ENCODE measurements at regions of chr5 and their contacts with region 1.

Region 1: GRCh38 chr5:139651853-139652787 is 4.0 kb downstream of the CXXC5 start:
- DNase-seq: peak; percentile 91
- ATAC-seq: peak; percentile 56
- H3K4me3 Mint-ChIP-seq: peak overlapping the region; percentile 98
- H3K27ac Mint-ChIP-seq: peak overlapping the region; percentile 85
- H3K4me1 Mint-ChIP-seq: peaks cover 76% of the 10 kb centered on the region
- H3K27me3 Mint-ChIP-seq: no peaks in the 10 kb centered on the region
- CTCF ChIP-seq: no peak

Region 2: GRCh38 chr5:139593716-139594319 is 58.3 kb before region 1 on chr5:
- CTCF ChIA-PET with region 1: no interaction called
- POLR2A ChIA-PET with region 1: no interaction called
- intact Hi-C with region 1: no loop called
- DNase-seq: no peak
- ATAC-seq: no peak
- H3K4me3 Mint-ChIP-seq: no peak overlapping the region
- H3K27ac Mint-ChIP-seq: no peak overlapping the region
- H3K4me1 Mint-ChIP-seq: peaks cover 72% of the 10 kb centered on the region
- H3K27me3 Mint-ChIP-seq: no peaks in the 10 kb centered on the region
- CTCF ChIP-seq: no peak

Region 3: GRCh38 chr5:139670369-139671095 is 18.4 kb after region 1 on chr5:
- CTCF ChIA-PET with region 1: interaction called, 37 read pairs
- POLR2A ChIA-PET with region 1: interaction called, 676 read pairs
- intact Hi-C with region 1: loop called (anchors 1 kb)
- DNase-seq: peak; percentile 65
- ATAC-seq: peak; percentile 61
- H3K4me3 Mint-ChIP-seq: peak overlapping the region; percentile 86
- H3K27ac Mint-ChIP-seq: peak overlapping the region; percentile 92
- H3K4me1 Mint-ChIP-seq: peaks cover 92% of the 10 kb centered on the region
- H3K27me3 Mint-ChIP-seq: no peaks in the 10 kb centered on the region
- CTCF ChIP-seq: no peak

Region 4: GRCh38 chr5:139684881-139685749 is 33.0 kb after region 1 on chr5:
- CTCF ChIA-PET with region 1: interaction called, 20 read pairs
- POLR2A ChIA-PET with region 1: interaction called, 15 read pairs
- intact Hi-C with region 1: loop called (anchors 1 kb)
- DNase-seq: no peak
- ATAC-seq: no peak
- H3K4me3 Mint-ChIP-seq: no peak overlapping the region
- H3K27ac Mint-ChIP-seq: peak overlapping the region; percentile 74
- H3K4me1 Mint-ChIP-seq: peaks cover 69% of the 10 kb centered on the region
- H3K27me3 Mint-ChIP-seq: no peaks in the 10 kb centered on the region
- CTCF ChIP-seq: no peak

Region 5: DNA sequence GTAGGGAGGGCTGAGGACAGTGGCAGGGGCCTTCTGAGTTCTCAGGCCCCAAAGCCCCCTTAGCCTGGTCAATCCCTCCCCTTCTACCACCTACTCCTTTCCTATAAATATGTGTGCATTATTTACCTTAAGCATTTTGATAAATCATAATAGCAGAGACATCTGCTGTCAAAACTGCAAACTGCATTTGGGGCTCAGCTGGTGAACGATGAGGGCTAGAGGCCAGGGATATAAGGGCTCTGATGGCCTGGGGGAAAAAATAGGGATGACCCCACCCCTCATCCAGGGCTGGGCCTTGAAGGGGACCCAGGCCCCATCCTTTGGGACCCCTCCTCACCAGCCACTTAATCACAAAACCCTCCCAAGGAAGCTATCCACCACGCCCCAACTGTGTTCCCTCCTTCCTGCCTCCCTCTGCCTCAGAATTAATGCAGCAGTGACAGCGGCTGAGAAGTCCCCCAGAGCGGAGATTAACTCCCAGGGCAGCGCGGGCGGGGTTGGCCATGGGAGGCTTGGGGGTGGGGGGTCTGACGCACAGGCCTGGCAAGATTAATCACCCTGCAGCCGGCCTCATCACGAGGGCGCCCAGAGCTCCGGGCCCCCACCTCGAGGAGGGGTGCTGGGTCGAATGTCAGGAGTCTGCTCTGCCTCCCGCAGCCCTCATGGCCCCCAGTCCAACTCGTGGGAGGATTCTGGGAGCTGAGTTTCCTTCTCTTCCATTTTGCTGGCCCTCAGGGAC is 38.1 kb after region 1 on chr5:
- CTCF ChIA-PET with region 1: interaction called, 20 read pairs
- POLR2A ChIA-PET with region 1: interaction called, 15 read pairs
- intact Hi-C with region 1: loop called (anchors 1 kb)
- DNase-seq: no peak
- ATAC-seq: peak; percentile 56
- H3K4me3 Mint-ChIP-seq: no peak overlapping the region
- H3K27ac Mint-ChIP-seq: peak overlapping the region; percentile 67
- H3K4me1 Mint-ChIP-seq: peaks cover 53% of the 10 kb centered on the region
- H3K27me3 Mint-ChIP-seq: no peaks in the 10 kb centered on the region
- CTCF ChIP-seq: peak; percentile 19